Activated T-helper 2 cell treated with anti-CD3 and anti-CD28 coated beads, Interferon-gamma antibody, Interleukin-2, Interleukin-4, amounts not matched to agents 10 μg/mL and 5 μg/mL and 100 μg/mL, durations not matched to agents 14 hours and 24 hours and 36 hours (primary cell): ENCODE measurements at regions of chr1 and their contacts with region 1.

Region 1: GRCh38 chr1:214515544-214516429 is 35.6 kb downstream of the PTPN14 start:
- DNase-seq: no peak
- H3K4me3 Mint-ChIP-seq: no peak overlapping the region
- H3K27ac Mint-ChIP-seq: no peak overlapping the region
- H3K4me1 Mint-ChIP-seq: peaks cover 40% of the 10 kb centered on the region
- H3K27me3 Mint-ChIP-seq: no peaks in the 10 kb centered on the region

Region 2: DNA sequence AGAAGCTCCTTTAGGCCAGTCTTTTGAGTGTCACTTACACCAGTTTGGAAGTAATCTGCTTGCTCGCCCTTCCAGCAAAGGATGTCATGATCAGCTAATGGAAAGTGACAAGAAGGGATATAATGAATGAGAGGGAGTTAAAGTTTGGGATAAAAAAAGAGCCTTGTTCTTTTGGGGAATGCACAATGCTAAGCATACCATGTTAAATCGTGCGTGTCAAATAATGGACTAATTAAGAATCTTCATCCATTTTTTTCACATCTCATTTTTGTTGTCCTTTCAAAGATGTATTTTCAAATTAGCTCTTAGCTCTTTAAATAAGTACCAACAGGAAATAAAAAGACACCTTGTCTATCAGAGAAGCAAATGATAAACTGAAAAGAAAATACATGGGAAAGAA is 547.4 kb before region 1 on chr1:
- intact Hi-C with region 1: no loop called
- DNase-seq: no peak
- H3K4me3 Mint-ChIP-seq: no peak overlapping the region
- H3K27ac Mint-ChIP-seq: no peak overlapping the region
- H3K4me1 Mint-ChIP-seq: no peaks in the 10 kb centered on the region
- H3K27me3 Mint-ChIP-seq: peaks cover 16% of the 10 kb centered on the region

Region 3: GRCh38 chr1:214224611-214225354 is 291.0 kb before region 1 on chr1:
- intact Hi-C with region 1: no loop called
- DNase-seq: no peak
- H3K4me3 Mint-ChIP-seq: no peak overlapping the region
- H3K27ac Mint-ChIP-seq: no peak overlapping the region
- H3K4me1 Mint-ChIP-seq: peaks cover 8% of the 10 kb centered on the region
- H3K27me3 Mint-ChIP-seq: peaks cover 59% of the 10 kb centered on the region

Region 4: GRCh38 chr1:214476958-214477870 is 38.6 kb before region 1 on chr1:
- intact Hi-C with region 1: loop called (anchors 5 kb)
- DNase-seq: no peak
- H3K4me3 Mint-ChIP-seq: no peak overlapping the region
- H3K27ac Mint-ChIP-seq: no peak overlapping the region
- H3K4me1 Mint-ChIP-seq: peaks cover 41% of the 10 kb centered on the region
- H3K27me3 Mint-ChIP-seq: no peaks in the 10 kb centered on the region